ENCODE measurements at regions of chr1 and their contacts with region 1.

Region 1: DNA sequence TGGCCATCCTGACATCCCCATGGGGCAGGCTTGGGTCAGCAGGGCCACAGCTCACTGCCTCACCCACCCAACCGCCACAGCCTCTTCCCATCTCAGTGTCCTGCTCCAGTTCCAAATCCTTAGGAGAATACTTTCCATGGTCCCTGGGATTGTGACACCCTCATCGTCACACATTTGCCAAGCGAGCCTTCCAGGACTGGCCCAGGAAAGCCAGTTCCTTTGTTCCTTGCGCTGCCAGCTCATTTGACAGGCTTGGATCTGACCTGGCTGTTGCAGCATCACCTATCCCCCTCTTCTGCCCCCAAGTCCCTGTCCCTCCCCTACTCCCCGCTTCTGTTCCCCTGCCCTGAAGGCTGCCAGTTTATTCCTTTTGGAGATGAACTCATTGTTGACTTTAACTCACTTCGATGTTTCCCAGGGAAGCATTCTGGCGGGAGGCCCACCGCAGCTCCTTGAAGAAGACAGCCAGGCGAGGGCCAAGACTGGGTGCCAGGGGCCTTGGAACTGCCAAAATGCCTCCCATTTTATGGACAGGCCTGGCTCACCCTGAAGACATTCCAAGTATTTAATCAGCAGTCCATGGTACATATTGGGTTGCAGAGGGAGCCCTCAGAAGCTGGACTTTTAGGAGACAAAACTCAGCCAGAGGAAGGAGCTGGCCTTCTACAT is 10.2 kb upstream of the GNL2 start:
- DNase-seq: no peak
- H3K4me3 ChIP-seq: peak overlapping the region in 1 of 8 donors; percentile 38
- H3K27ac ChIP-seq: peak overlapping the region in 4 of 8 donors; percentile 30 to 70 (median 36)
- H3K4me1 ChIP-seq: peaks cover 0 to 17% (median 3%) of the 10 kb centered on the region in 6 donors
- H3K27me3 ChIP-seq: peaks cover 0 to 5% (median 0%) of the 10 kb centered on the region in 7 donors
- CTCF ChIP-seq: no peak
- POLR2A ChIP-seq: no peak

Region 2: DNA sequence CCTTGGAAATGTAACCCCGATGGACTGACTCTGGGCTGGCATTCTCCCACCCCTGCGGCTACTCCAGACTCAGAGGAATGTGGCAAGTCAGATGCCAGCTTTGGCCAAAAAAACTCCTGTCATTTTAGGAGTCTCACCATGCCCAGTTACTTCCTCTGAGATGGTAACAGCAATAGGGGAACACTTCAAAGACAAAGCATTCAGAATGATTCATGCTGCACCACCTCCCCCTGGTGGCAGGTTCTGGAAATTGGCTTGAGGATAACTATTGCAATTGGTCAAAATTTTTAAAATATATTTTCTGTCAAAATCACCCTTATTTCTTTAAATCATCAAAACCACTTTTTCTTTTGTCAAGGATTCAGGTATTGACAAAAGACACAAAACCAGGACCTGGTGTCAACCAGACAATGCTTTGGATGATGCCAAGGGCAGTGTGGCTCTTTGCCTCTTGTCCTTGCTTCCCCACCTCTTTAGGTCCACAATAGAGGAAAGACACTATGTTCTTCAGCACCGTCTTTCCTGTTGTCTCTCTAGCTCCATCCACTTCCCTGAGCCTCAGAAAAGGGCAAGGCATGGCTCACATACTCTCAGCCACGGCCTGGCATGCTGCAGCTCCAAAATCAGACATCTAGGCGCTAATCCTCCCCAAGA is 76.5 kb after region 1 on chr1:
- intact Hi-C with region 1: loop called (anchors 2 kb)
- DNase-seq: peak; percentile 84
- H3K4me3 ChIP-seq: no peak overlapping the region
- H3K27ac ChIP-seq: no peak overlapping the region
- H3K4me1 ChIP-seq: peaks cover 0 to 9% (median 3%) of the 10 kb centered on the region in 6 donors
- H3K27me3 ChIP-seq: no peaks in the 10 kb centered on the region
- CTCF ChIP-seq: peak; percentile 75 to 92 (median 84)
- POLR2A ChIP-seq: no peak

Measured in spleen (tissue), 13 donors.